ENCODE measurements at regions of chr1 and their contacts with region 1.

Region 1: GRCh38 chr1:22503721-22504410 is 52.2 kb downstream of the ZBTB40 start:
- DNase-seq: peak; percentile 25
- ATAC-seq: peak; percentile 78
- H3K4me3 ChIP-seq: no peak overlapping the region
- H3K27ac ChIP-seq: no peak overlapping the region
- H3K4me1 ChIP-seq: peaks cover 7% of the 10 kb centered on the region; the same call in 1 of the 2 replicates
- H3K27me3 ChIP-seq: no peaks in the 10 kb centered on the region
- CTCF ChIP-seq: no peak
- POLR2A ChIP-seq: no peak
- RAD21 ChIP-seq: no peak

Region 2: DNA sequence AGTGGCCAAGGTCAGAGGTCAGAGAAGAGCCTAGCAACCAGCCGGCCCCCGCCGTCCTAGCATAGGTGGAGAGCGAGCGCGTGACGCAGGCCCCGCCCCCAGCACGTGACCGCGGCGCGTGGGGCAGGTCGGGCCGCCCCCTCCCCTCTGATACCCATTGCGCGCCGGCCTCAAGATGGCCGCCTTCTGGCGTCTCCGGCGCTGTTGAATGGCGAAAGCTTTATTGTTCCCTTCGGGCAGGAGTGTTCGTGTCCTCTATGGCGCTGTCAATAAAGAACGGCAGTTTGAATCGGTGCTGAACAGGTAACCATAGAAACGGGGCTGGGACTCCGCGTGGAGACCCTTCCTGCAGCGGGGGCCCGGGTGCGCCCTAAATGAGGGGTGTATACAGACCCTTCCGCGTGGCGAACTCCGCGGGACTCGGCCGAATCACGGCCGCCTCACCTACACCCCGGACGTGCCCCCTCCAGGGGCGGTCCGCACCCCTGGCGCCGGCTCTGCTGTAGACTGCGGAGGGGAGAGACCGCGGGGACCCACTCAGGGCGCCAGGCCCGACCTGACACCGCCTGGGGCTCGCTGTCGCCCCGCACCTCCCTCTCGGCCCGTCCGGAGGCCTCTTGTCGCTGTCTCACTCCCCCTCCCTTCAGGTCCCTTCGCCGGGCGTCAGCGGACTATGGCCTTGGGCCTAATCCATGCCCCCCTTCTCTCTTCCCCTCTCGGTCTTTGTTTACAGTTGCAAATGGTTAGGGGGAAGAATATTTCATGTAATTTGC is 52.0 kb before region 1 on chr1 and contains the start of gene ZBTB40:
- CTCF ChIA-PET with region 1: interaction called, 4 read pairs
- POLR2A ChIA-PET with region 1: no interaction called
- dilution Hi-C with region 1: no loop called
- in situ Hi-C with region 1: no loop called
- intact Hi-C with region 1: loop called (anchors 2 kb)
- DNase-seq: peak; percentile 98
- ATAC-seq: peak; percentile 94
- H3K4me3 ChIP-seq: peak within 1 kb of the TSS; percentile 70
- H3K27ac ChIP-seq: peak within 1 kb of the TSS; percentile 88
- H3K4me1 ChIP-seq: peaks cover 5% of the 10 kb centered on the region
- H3K27me3 ChIP-seq: no peaks in the 10 kb centered on the region
- CTCF ChIP-seq: no peak
- POLR2A ChIP-seq: no peak; the same call in 1 of the 2 replicates
- RAD21 ChIP-seq: no peak
- total RNA-seq, gene ZBTB40: 8.9 and 9.7 TPM in 2 replicates

Region 3: DNA sequence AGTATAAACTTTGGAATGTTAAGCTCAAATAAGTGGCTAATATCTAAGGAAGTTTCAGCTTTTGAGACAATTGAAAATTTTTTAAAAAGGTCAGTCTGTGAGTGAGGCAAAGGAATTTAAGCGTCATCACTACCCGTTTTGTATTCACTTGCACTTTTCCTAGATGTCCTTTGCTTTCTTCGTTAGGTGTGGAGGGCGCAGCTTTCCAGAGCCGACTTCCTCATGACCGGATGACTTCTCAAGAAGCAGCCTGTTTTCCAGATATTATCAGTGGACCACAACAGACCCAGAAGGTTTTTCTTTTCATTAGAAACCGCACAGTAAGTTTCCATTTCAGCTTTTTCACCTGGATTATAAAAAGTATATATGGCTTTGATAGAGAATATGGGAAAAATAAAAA is 546.3 kb after region 1 on chr1:
- CTCF ChIA-PET with region 1: no interaction called
- POLR2A ChIA-PET with region 1: no interaction called
- dilution Hi-C with region 1: no loop called
- in situ Hi-C with region 1: no loop called
- intact Hi-C with region 1: no loop called
- DNase-seq: no peak
- ATAC-seq: no peak
- H3K4me3 ChIP-seq: no peak overlapping the region
- H3K27ac ChIP-seq: no peak overlapping the region
- H3K4me1 ChIP-seq: 0 out of 2 replicates have a peak, but pooled peaks cover 3% of the 10 kb centered on the region
- H3K27me3 ChIP-seq: no peaks in the 10 kb centered on the region
- CTCF ChIP-seq: no peak
- POLR2A ChIP-seq: no peak
- RAD21 ChIP-seq: no peak

Measured in IMR-90 (cell line).